ENCODE measurements at regions of chr6 and their contacts with region 1.

Region 1: DNA sequence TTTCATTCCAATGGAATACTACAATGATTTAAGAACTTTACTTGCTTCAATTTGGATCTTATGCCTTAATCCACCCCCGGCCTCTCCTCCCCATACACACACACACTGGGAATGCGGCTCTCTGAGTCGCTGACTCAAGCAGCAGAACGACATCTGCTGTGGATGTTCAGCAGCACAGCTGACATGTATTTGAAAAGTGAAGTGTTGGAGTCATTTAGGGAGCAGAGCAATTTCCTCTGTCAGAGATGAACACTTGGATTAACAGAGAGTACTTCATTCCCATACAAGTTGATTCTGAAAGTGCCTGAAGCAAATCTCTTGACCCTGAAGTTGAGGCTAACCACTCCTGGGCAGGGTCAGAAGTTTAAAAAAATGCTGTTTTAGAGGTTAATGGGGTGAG is 27.9 kb upstream of the LAMA4 start:
- DNase-seq: peak; percentile 39 to 87
- H3K4me3 ChIP-seq: no peak overlapping the region
- H3K27ac ChIP-seq: peak overlapping the region; percentile 57
- H3K4me1 ChIP-seq: peaks cover 44% of the 10 kb centered on the region
- H3K27me3 ChIP-seq: no peaks in the 10 kb centered on the region
- CTCF ChIP-seq: peak; percentile 47; the same call in 1 of the 2 replicates

Region 2: DNA sequence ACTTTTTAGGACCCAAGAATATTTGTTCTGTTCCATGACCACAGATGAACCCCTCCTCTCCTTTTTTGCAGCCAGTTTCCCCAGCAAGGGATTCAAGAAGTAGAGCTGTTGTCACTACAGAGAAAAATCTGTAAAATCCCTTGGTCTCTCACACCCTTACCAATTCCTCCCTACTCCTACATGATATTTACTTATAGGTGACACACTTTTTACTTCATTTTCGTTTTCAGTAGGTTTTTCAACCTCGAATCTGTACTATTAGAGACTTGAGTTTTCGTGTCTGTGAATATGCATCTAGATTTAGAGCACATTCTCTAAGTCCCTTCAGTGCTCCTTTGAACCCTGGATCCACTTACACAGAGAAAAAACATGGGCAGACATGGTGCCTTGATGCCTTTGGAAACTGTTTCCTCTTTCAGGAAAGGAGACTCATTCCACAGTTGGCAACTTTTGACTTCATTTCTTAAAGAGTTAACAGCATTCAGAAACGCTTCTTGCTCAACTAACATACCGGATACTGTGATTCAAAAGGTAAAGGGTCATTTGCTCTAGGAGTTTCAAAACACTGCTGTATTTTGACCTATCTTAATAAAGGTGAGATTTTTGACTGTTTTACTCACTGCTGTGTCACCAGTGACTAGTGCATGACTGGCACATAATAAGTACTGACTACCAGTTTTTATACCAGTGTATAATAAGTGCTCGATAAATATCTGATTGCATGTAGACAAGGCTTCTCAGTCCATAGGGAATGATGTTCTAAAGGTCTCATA is 78.5 kb before region 1 on chr6:
- CTCF ChIA-PET with region 1: no interaction called
- POLR2A ChIA-PET with region 1: no interaction called
- intact Hi-C with region 1: loop called (anchors 1 kb)
- DNase-seq: peak; percentile 16 to 100
- H3K4me3 ChIP-seq: peak overlapping the region; percentile 34
- H3K27ac ChIP-seq: peak overlapping the region; percentile 98
- H3K4me1 ChIP-seq: peaks cover 75% of the 10 kb centered on the region
- H3K27me3 ChIP-seq: no peaks in the 10 kb centered on the region
- CTCF ChIP-seq: no peak

Region 3: GRCh38 chr6:113047148-113047547 is 764.9 kb after region 1 on chr6:
- CTCF ChIA-PET with region 1: no interaction called
- POLR2A ChIA-PET with region 1: no interaction called
- intact Hi-C with region 1: no loop called
- DNase-seq: no peak
- H3K4me3 ChIP-seq: no peak overlapping the region
- H3K27ac ChIP-seq: no peak overlapping the region
- H3K4me1 ChIP-seq: peaks cover 6% of the 10 kb centered on the region; the same call in 1 of the 2 replicates
- H3K27me3 ChIP-seq: no peaks in the 10 kb centered on the region
- CTCF ChIP-seq: no peak

Measured in PC-9 (cell line).